GM12878 (cell line): ENCODE measurements at regions of chr14 and their contacts with region 1.

Region 1: GRCh38 chr14:50060871-50061663 is 55.3 kb downstream of the VCPKMT start:
- DNase-seq: no peak
- ATAC-seq: peak; percentile 51
- H3K4me3 ChIP-seq: 0 out of 2 replicates have a peak overlapping the region, but pooled peaks have one; percentile 25
- H3K27ac ChIP-seq: peak overlapping the region; percentile 98
- H3K4me1 ChIP-seq: peaks cover 53% of the 10 kb centered on the region
- H3K27me3 ChIP-seq: no peaks in the 10 kb centered on the region
- CTCF ChIP-seq: no peak
- EP300 ChIP-seq: peak in 1 of 2 experiments; percentile 66; a peak in 2 of 4 replicates
- POLR2A ChIP-seq: no peak
- RAD21 ChIP-seq: peak; percentile 32; the same call in 1 of the 2 replicates

Region 2: GRCh38 chr14:49892636-49893308 is 168.3 kb before region 1 on chr14 and contains the start of gene ARF6:
- CTCF ChIA-PET with region 1: interaction called, 3 read pairs
- POLR2A ChIA-PET with region 1: interaction called, 8 read pairs
- RAD21 ChIA-PET with region 1: interaction called, 13 read pairs
- SMC1A ChIA-PET with region 1: interaction called, 9 read pairs
- in situ Hi-C with region 1: no loop called
- intact Hi-C with region 1: loop called (anchors 1 kb)
- DNase-seq: peak; percentile 81
- ATAC-seq: peak; percentile 83
- H3K4me3 ChIP-seq: peak within 1 kb of the TSS; percentile 97
- H3K27ac ChIP-seq: peak within 1 kb of the TSS; percentile 100
- H3K4me1 ChIP-seq: peaks cover 5% of the 10 kb centered on the region
- H3K27me3 ChIP-seq: no peaks in the 10 kb centered on the region
- CTCF ChIP-seq: peak in 2 of 3 experiments; percentile 15 to 29; a peak in 1 of 6 replicates
- EP300 ChIP-seq: no peak
- POLR2A ChIP-seq: peak; percentile 92
- RAD21 ChIP-seq: 0 out of 2 replicates have a peak, but pooled peaks have one; percentile 10
- polyA plus RNA-seq, gene ARF6: 46.8 to 86.6 TPM

Region 3: DNA sequence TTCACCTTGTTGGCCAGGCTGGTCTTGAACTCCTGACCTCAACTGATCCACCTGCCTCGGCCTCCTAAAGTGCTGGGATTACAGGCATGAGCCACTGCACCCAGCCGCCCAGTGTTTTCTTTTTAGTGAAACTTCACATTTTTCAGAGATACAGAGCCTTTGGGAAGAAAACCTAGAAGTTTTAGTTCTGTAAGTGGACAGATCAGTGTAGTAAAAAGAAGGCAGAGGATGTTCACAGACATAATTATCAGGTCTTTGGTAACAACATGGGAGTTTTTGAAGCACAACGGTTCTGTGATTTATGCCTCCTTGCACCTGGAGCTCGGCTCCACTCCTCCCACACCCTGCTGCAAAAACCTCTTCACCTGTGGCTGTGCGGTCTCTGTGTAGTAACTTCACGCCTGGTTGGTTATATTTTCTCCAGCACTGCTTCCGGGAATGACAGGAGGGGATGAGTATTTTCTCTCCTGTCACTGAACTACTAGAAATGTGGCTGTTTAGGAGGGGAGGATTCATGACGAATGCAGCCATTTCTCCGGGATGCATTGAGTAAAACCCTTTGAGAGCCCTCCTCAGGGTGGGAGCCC is 101.2 kb before region 1 on chr14:
- CTCF ChIA-PET with region 1: no interaction called
- POLR2A ChIA-PET with region 1: no interaction called
- RAD21 ChIA-PET with region 1: interaction called, 17 read pairs
- SMC1A ChIA-PET with region 1: interaction called, 8 read pairs
- in situ Hi-C with region 1: no loop called
- intact Hi-C with region 1: no loop called
- DNase-seq: peak; percentile 76
- ATAC-seq: peak; percentile 82
- H3K4me3 ChIP-seq: 0 out of 2 replicates have a peak overlapping the region, but pooled peaks have one; percentile 41
- H3K27ac ChIP-seq: peak overlapping the region; percentile 78
- H3K4me1 ChIP-seq: peaks cover 42% of the 10 kb centered on the region
- H3K27me3 ChIP-seq: no peaks in the 10 kb centered on the region
- CTCF ChIP-seq: no peak
- EP300 ChIP-seq: no peak
- POLR2A ChIP-seq: no peak
- RAD21 ChIP-seq: 0 out of 2 replicates have a peak, but pooled peaks have one; percentile 23

Region 4: GRCh38 chr14:49984424-49984823 is 76.6 kb before region 1 on chr14:
- CTCF ChIA-PET with region 1: no interaction called
- POLR2A ChIA-PET with region 1: no interaction called
- RAD21 ChIA-PET with region 1: no interaction called
- SMC1A ChIA-PET with region 1: no interaction called
- in situ Hi-C with region 1: no loop called
- intact Hi-C with region 1: no loop called
- DNase-seq: no peak
- ATAC-seq: no peak
- H3K4me3 ChIP-seq: no peak overlapping the region
- H3K27ac ChIP-seq: no peak overlapping the region
- H3K4me1 ChIP-seq: no peaks in the 10 kb centered on the region
- H3K27me3 ChIP-seq: no peaks in the 10 kb centered on the region
- CTCF ChIP-seq: no peak
- EP300 ChIP-seq: no peak
- POLR2A ChIP-seq: no peak
- RAD21 ChIP-seq: no peak

Region 5: DNA sequence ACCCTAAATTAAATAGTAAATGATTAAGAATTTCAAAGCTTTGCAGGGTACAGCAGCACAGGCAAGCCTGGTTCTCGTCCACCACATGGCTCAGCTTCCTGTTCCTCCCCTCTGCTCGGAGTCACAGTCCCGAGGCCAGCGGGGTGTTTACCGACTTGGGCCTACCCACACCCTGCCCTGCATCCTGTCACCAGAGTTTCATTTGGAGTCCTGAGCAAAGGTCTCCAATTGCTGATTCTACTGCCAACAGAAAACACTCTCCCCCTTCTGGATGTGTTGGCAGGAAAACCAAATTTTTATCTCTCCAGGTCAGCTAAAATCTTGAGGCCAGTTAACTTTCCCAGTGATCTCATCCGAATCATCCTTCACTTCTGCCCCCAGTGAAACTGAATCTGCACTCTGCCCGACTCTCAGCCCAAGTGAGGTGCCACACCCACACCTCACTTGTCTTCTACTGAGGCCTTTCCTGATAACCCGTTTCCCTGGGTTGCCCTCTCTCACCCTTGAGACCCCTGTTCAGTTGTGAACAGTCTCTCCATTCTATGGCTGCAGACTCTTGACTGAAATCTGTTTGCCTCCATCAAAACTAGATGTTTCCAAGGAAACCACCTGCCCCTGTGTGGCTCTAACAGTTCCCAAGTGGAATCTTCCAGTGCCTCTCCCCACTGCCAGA is 15.9 kb before region 1 on chr14:
- CTCF ChIA-PET with region 1: interaction called, 14 read pairs
- POLR2A ChIA-PET with region 1: interaction called, 62 read pairs
- RAD21 ChIA-PET with region 1: interaction called, 110 read pairs
- SMC1A ChIA-PET with region 1: interaction called, 96 read pairs
- in situ Hi-C with region 1: no loop called
- intact Hi-C with region 1: loop called (anchors 1 kb)
- DNase-seq: peak; percentile 54
- ATAC-seq: peak; percentile 90
- H3K4me3 ChIP-seq: no peak overlapping the region
- H3K27ac ChIP-seq: peak overlapping the region; percentile 50
- H3K4me1 ChIP-seq: peaks cover 42% of the 10 kb centered on the region
- H3K27me3 ChIP-seq: no peaks in the 10 kb centered on the region
- CTCF ChIP-seq: no peak
- EP300 ChIP-seq: no peak
- POLR2A ChIP-seq: peak; percentile 55; the same call in 1 of the 2 replicates
- RAD21 ChIP-seq: peak; percentile 9; the same call in 1 of the 2 replicates

Region 6: DNA sequence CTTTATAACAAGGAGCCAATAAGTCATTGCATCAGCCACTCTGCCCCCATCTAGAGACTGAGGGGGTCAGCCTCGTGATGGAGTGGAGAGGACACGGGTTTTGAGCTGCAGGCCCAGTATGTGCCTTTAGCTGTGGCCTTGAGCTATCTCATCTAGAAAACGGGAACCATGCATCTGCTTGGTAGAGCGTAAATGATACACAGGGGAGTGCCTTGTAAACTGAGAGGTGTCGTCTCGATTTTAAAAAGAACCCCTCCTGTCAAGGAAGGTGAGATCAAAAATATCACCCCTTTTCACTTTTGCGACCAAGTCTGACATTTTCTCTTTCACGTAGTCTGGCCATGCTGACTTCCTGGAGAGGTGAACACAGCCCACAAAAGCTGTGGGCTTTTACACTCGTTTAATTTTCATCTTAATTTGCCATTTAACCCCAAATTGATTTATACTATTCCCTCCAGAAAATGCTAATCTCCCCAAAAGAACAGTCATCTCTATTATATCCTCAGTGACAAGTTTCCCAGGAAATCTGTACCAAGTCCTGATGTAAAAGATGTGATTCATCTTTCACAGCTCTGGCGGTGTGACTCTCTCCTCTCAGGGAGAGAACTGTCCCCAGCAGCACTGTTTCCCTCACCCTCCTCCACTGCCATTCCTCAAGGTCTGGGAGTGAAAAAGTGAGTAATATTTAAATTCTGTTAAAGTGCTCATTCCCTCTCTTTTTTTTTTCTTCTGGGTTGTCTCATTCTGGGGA is 24.7 kb after region 1 on chr14:
- CTCF ChIA-PET with region 1: interaction called, 41 read pairs
- POLR2A ChIA-PET with region 1: interaction called, 42 read pairs
- RAD21 ChIA-PET with region 1: interaction called, 99 read pairs
- SMC1A ChIA-PET with region 1: interaction called, 74 read pairs
- in situ Hi-C with region 1: no loop called
- intact Hi-C with region 1: loop called (anchors 1 kb)
- DNase-seq: peak; percentile 95
- ATAC-seq: peak; percentile 73
- H3K4me3 ChIP-seq: peak overlapping the region; percentile 38; the same call in 1 of the 2 replicates
- H3K27ac ChIP-seq: peak overlapping the region; percentile 95
- H3K4me1 ChIP-seq: peaks cover 68% of the 10 kb centered on the region
- H3K27me3 ChIP-seq: no peaks in the 10 kb centered on the region
- CTCF ChIP-seq: no peak
- EP300 ChIP-seq: peak; percentile 85 to 91
- POLR2A ChIP-seq: peak; percentile 48; the same call in 1 of the 2 replicates
- RAD21 ChIP-seq: no peak

Region 7: DNA sequence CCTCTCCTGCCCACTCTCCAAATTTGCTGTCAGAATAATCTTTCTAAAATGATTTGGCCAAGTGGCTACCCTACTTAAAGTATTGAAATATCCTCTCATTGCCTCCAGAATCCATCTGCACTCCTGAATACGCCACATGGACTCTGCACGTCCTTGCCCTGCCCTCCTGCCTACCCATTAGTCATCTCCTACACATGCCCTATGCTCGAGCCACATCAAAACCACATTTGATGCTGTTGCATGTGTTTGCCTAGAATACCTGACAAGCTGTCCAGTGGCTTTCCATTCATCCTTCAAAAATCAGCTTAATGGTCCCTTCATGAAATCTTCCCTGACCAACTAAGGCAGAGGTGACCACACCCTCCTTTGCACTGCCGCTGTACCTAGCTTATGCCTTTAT is 38.3 kb after region 1 on chr14:
- CTCF ChIA-PET with region 1: interaction called, 5 read pairs
- POLR2A ChIA-PET with region 1: interaction called, 3 read pairs
- RAD21 ChIA-PET with region 1: interaction called, 11 read pairs
- SMC1A ChIA-PET with region 1: interaction called, 14 read pairs
- in situ Hi-C with region 1: no loop called
- intact Hi-C with region 1: loop called (anchors 1 kb)
- DNase-seq: no peak
- ATAC-seq: no peak
- H3K4me3 ChIP-seq: no peak overlapping the region
- H3K27ac ChIP-seq: no peak overlapping the region
- H3K4me1 ChIP-seq: peaks cover 12% of the 10 kb centered on the region
- H3K27me3 ChIP-seq: no peaks in the 10 kb centered on the region
- CTCF ChIP-seq: no peak
- EP300 ChIP-seq: no peak
- POLR2A ChIP-seq: no peak
- RAD21 ChIP-seq: no peak

Region 8: GRCh38 chr14:50109342-50109741 is 48.3 kb after region 1 on chr14:
- CTCF ChIA-PET with region 1: interaction called, 4 read pairs
- POLR2A ChIA-PET with region 1: interaction called, 3 read pairs
- RAD21 ChIA-PET with region 1: interaction called, 3 read pairs
- SMC1A ChIA-PET with region 1: interaction called, 14 read pairs
- in situ Hi-C with region 1: no loop called
- intact Hi-C with region 1: loop called (anchors 2 kb)
- DNase-seq: no peak
- ATAC-seq: no peak
- H3K4me3 ChIP-seq: no peak overlapping the region
- H3K27ac ChIP-seq: no peak overlapping the region
- H3K4me1 ChIP-seq: peaks cover 18% of the 10 kb centered on the region
- H3K27me3 ChIP-seq: no peaks in the 10 kb centered on the region
- CTCF ChIP-seq: no peak
- EP300 ChIP-seq: no peak
- POLR2A ChIP-seq: no peak
- RAD21 ChIP-seq: no peak

Region 9: GRCh38 chr14:50186107-50186506 is 125.0 kb after region 1 on chr14:
- CTCF ChIA-PET with region 1: no interaction called
- POLR2A ChIA-PET with region 1: no interaction called
- RAD21 ChIA-PET with region 1: no interaction called
- SMC1A ChIA-PET with region 1: no interaction called
- in situ Hi-C with region 1: no loop called
- intact Hi-C with region 1: no loop called
- DNase-seq: no peak
- ATAC-seq: no peak
- H3K4me3 ChIP-seq: no peak overlapping the region
- H3K27ac ChIP-seq: no peak overlapping the region
- H3K4me1 ChIP-seq: no peaks in the 10 kb centered on the region
- H3K27me3 ChIP-seq: no peaks in the 10 kb centered on the region
- CTCF ChIP-seq: no peak
- EP300 ChIP-seq: no peak
- POLR2A ChIP-seq: no peak
- RAD21 ChIP-seq: no peak